GM10248 (cell line): ENCODE measurements at regions of chr10 and their contacts with region 1.

Region 1: GRCh38 chr10:62437696-62438095 is 63.5 kb downstream of the ZNF365 start:
- DNase-seq: peak; percentile 30
- CTCF ChIP-seq: peak; percentile 68

Region 2: DNA sequence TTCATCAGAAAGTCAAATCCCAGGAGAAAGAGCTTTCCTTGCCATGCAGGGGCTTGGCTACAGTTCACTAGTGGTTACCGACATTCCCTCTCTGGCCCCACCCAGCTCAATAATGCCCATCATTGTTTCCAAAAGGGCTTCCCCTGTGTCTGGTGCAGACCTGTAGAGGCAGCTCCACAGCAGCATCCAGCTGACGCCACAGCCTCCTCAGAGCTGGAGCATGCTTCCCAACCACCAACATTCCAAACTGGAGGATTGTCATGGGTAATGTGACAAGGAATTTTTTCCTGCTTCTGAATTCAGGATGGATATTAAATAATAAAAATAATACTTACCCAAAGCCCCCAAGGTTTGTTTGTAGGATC is 13.9 kb after region 1 on chr10:
- CTCF ChIA-PET with region 1: interaction called, 53 read pairs
- POLR2A ChIA-PET with region 1: no interaction called
- DNase-seq: no peak
- CTCF ChIP-seq: no peak

Region 3: GRCh38 chr10:62456611-62457101 is 19.0 kb after region 1 on chr10:
- CTCF ChIA-PET with region 1: interaction called, 53 read pairs
- POLR2A ChIA-PET with region 1: no interaction called
- DNase-seq: peak; percentile 69
- CTCF ChIP-seq: no peak

Region 4: DNA sequence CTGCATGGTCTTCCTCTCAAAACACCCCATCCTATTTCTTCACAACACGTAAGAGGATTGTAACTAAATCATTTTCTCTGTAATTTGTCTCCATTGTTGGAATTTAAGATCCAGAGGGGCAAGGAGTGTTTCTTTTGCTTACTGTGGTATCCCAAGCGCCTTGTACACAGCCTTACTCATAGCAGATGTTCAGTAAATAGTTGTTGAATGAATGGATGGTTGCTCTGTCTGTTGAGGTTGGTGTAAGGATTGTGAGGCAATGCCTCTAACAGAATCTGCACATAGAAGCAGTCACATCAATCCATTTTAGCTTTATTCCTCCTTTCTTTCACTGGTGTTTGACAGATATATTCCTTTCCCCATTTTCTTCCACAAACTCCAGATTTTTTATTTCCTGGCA is 26.6 kb after region 1 on chr10:
- CTCF ChIA-PET with region 1: interaction called, 16 read pairs
- POLR2A ChIA-PET with region 1: no interaction called
- DNase-seq: no peak
- CTCF ChIP-seq: no peak

Region 5: DNA sequence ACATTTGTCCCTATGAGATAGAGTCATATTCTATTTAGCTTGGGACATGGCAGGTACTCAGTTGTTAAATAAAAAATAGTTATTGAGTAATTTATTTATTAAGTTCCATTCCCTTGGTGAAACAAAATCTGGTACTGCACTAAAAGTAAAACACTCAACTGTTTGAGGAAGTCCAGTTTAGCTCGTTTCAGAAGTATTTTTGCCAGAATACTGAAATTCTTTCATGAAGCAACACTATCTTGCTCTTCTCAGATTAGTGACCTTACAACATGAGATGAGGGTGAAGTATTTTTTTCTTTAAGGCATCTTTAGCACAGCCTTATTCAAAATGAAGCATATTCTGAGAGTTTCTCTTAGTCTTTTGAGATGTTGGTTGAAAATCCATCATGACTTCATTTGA is 42.5 kb after region 1 on chr10:
- CTCF ChIA-PET with region 1: interaction called, 10 read pairs
- POLR2A ChIA-PET with region 1: no interaction called
- DNase-seq: no peak
- CTCF ChIP-seq: no peak

Region 6: GRCh38 chr10:63083904-63084689 is 646.4 kb after region 1 on chr10:
- CTCF ChIA-PET with region 1: interaction called, 32 read pairs
- POLR2A ChIA-PET with region 1: no interaction called
- DNase-seq: peak; percentile 56
- CTCF ChIP-seq: peak; percentile 61

Region 7: GRCh38 chr10:63145782-63146181 is 708.1 kb after region 1 on chr10:
- CTCF ChIA-PET with region 1: interaction called, 12 read pairs
- POLR2A ChIA-PET with region 1: no interaction called
- DNase-seq: no peak
- CTCF ChIP-seq: no peak